ENCODE measurements at regions of chr1 and their contacts with region 1.

Region 1: GRCh38 chr1:212344905-212345304 is 59.7 kb downstream of the PPP2R5A start:
- DNase-seq: no peak
- H3K4me3 Mint-ChIP-seq: no peak overlapping the region
- H3K27ac Mint-ChIP-seq: no peak overlapping the region
- H3K4me1 Mint-ChIP-seq: peaks cover 5% of the 10 kb centered on the region
- H3K27me3 Mint-ChIP-seq: no peaks in the 10 kb centered on the region

Region 2: GRCh38 chr1:212301580-212301979 is 43.3 kb before region 1 on chr1:
- CTCF ChIA-PET with region 1: no interaction called
- intact Hi-C with region 1: no loop called
- DNase-seq: no peak
- H3K4me3 Mint-ChIP-seq: no peak overlapping the region
- H3K27ac Mint-ChIP-seq: no peak overlapping the region
- H3K4me1 Mint-ChIP-seq: peaks cover 50% of the 10 kb centered on the region
- H3K27me3 Mint-ChIP-seq: no peaks in the 10 kb centered on the region

Region 3: GRCh38 chr1:212311846-212312497 is 32.9 kb before region 1 on chr1:
- CTCF ChIA-PET with region 1: no interaction called
- intact Hi-C with region 1: no loop called
- DNase-seq: no peak
- H3K4me3 Mint-ChIP-seq: no peak overlapping the region
- H3K27ac Mint-ChIP-seq: no peak overlapping the region
- H3K4me1 Mint-ChIP-seq: peaks cover 49% of the 10 kb centered on the region
- H3K27me3 Mint-ChIP-seq: no peaks in the 10 kb centered on the region

Region 4: GRCh38 chr1:212323066-212323465 is 21.8 kb before region 1 on chr1:
- CTCF ChIA-PET with region 1: no interaction called
- intact Hi-C with region 1: loop called (anchors 2 kb)
- DNase-seq: no peak
- H3K4me3 Mint-ChIP-seq: no peak overlapping the region
- H3K27ac Mint-ChIP-seq: no peak overlapping the region
- H3K4me1 Mint-ChIP-seq: peaks cover 25% of the 10 kb centered on the region
- H3K27me3 Mint-ChIP-seq: no peaks in the 10 kb centered on the region